CD14-positive monocyte (primary cell): ENCODE measurements at regions of chr9 and their contacts with region 1.

Region 1: DNA sequence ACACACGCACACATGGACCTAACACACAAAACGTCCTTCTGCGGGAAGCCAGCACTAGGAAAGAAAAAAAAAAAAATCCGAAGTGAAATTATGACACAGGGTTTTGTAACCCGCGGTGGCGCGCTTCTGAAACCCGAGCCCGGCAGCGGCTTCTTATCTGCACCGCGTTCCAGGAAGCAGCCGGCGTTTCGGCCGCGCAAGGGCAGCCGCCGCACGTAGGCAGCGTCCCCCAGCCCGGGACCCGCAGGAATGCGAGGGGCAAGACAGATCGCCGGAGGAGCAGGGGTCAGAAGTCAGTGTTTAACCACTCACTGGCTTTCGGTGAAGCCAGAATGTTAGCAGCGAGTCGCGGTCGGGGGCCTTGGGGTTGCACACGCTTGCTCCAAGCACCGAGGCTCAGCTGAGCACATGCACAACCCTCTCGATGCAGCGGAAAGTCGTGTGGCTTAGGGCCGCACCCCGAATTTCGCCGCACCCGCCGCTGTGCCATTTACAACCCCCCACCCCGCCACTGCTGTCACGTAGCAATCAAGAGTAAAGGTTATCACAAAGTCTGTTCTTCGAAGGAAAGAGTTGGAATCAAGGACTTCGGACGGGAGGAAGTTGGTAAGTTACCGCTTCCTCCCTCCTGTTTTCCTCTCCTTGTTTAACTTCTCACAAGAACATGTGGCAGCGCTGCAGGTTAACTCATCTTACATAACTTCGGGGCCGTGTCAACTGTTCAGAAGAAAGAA is 167.9 kb downstream of the AUH start:
- DNase-seq: peak; percentile 74 to 87 (median 87)
- H3K4me3 ChIP-seq: peak overlapping the region; percentile 25 to 71 (median 37)
- H3K4me3 Mint-ChIP-seq: peak overlapping the region; percentile 79 to 92
- H3K27ac ChIP-seq: peak overlapping the region; percentile 87 to 94
- H3K27ac Mint-ChIP-seq: peak overlapping the region; percentile 93 to 99 (median 97)
- H3K4me1 ChIP-seq: peaks cover 72 to 80% of the 10 kb centered on the region in 2 donors
- H3K4me1 Mint-ChIP-seq: peaks cover 72% of the 10 kb centered on the region
- H3K27me3 ChIP-seq: no peaks in the 10 kb centered on the region
- H3K27me3 Mint-ChIP-seq: peaks cover 0 to 1% (median 0%) of the 10 kb centered on the region in 3 donors
- CTCF ChIP-seq: no peak

Region 2: DNA sequence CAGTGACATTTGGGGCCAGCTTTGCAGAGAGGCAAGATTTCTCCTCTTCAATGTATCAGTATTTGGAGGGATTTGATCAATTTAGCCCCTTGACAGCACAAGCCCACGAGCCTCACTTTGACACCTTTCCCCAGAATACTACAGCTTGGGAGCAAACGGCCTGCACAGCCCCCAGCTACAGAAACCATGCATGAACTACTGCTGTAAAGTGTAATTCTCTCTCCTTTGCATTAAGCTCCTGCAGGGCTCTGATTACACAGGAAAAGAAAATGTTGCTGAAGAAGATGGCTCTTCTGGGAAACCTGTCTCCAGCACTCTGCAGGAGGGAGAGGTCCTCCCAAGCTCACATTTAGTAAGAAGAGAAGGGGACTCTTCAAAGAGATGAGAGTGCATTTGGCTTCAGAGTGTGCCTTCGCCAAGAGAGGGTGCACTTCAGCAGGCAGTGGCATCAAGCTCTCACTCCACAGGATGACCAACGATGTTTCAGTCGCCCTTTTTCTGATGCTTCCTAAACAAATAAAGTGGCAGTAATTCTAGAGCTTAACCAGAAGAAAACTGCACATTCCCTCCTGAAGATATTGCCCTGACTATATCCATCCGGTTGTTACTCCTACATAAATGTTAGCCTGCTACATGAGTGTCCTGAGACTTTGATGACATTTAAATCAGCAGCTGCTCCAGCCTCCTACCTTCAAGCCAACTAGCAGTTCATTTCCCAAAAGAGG is 104.3 kb before region 1 on chr9:
- intact Hi-C with region 1: loop called (anchors 1 to 10 kb)
- DNase-seq: peak in 2 of 3 donors; percentile 8 to 29
- H3K4me3 ChIP-seq: no peak overlapping the region
- H3K4me3 Mint-ChIP-seq: no peak overlapping the region
- H3K27ac ChIP-seq: no peak overlapping the region
- H3K27ac Mint-ChIP-seq: peak overlapping the region in 1 of 7 donors; percentile 57
- H3K4me1 ChIP-seq: peaks cover 30 to 31% of the 10 kb centered on the region in 2 donors
- H3K4me1 Mint-ChIP-seq: peaks cover 32% of the 10 kb centered on the region
- H3K27me3 ChIP-seq: no peaks in the 10 kb centered on the region
- H3K27me3 Mint-ChIP-seq: no peaks in the 10 kb centered on the region
- CTCF ChIP-seq: peak; percentile 19

Region 3: GRCh38 chr9:91111876-91112275 is 81.9 kb before region 1 on chr9:
- intact Hi-C with region 1: no loop called
- DNase-seq: no peak
- H3K4me3 ChIP-seq: no peak overlapping the region
- H3K4me3 Mint-ChIP-seq: no peak overlapping the region
- H3K27ac ChIP-seq: no peak overlapping the region
- H3K27ac Mint-ChIP-seq: no peak overlapping the region
- H3K4me1 ChIP-seq: no peaks in the 10 kb centered on the region
- H3K4me1 Mint-ChIP-seq: no peaks in the 10 kb centered on the region
- H3K27me3 ChIP-seq: no peaks in the 10 kb centered on the region
- H3K27me3 Mint-ChIP-seq: peaks cover 1 to 5% (median 2%) of the 10 kb centered on the region in 3 donors
- CTCF ChIP-seq: no peak

Region 4: DNA sequence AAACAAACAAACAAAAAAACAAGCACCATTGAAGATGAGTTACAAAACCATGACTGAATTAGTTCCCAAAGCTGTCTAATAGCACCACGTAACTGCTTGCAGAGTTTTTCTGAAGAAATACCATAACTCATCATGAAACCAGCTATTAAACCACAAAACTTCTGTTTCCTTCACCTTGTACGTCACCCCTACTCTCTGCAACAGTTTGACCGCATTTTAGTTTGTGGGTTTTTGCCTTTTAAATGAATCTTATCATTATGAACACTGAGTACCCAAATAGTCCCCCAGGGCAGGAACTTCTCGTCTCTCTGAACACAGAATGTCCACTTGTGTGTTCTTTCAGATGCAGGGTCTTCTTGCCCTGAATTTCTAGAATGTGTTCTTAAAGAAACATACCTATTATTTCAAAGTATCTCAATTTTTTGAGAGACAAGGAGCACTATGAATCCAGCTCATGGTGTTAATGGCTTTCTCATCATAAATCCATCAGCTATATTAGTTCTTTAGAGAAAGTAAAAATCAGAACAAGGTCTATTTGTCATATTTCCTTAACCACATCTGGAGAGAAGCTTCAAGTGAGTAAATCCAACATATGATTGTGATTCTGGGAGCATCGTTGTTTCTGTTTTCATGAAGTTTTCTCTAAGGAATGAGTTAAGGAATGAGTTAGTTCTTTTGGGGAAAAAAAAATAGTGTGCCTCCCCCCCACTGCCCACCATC is 42.7 kb before region 1 on chr9:
- intact Hi-C with region 1: loop called (anchors 2 to 5 kb)
- DNase-seq: peak; percentile 89 to 96 (median 95)
- H3K4me3 ChIP-seq: no peak overlapping the region
- H3K4me3 Mint-ChIP-seq: peak overlapping the region; percentile 31 to 46
- H3K27ac ChIP-seq: peak overlapping the region in 1 of 2 donors; percentile 76
- H3K27ac Mint-ChIP-seq: peak overlapping the region; percentile 87 to 96 (median 94)
- H3K4me1 ChIP-seq: peaks cover 47 to 48% of the 10 kb centered on the region in 2 donors
- H3K4me1 Mint-ChIP-seq: peaks cover 57% of the 10 kb centered on the region
- H3K27me3 ChIP-seq: no peaks in the 10 kb centered on the region
- H3K27me3 Mint-ChIP-seq: peaks cover 2 to 8% (median 6%) of the 10 kb centered on the region in 3 donors
- CTCF ChIP-seq: no peak

Region 5: DNA sequence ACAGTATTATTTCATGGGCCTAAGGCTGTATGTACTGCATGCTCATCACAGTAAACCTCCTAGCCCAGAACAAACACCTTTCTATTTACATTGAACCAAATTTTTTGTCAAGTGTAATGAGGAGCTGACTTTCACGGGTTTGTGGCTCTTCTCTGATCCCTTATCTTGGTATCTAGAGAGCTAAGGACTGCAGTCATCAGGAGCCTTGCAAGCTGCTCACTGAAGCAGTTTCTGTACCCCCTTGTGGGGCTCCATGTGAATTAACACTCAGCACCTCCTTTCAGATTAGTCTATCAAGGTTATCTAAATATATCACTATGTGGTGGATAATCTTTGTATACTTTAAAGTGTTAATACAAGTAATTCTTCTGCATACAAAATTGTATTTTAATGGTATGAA is 59.7 kb after region 1 on chr9:
- intact Hi-C with region 1: loop called (anchors 5 to 10 kb)
- DNase-seq: peak in 1 of 3 donors; percentile 7
- H3K4me3 ChIP-seq: no peak overlapping the region
- H3K4me3 Mint-ChIP-seq: no peak overlapping the region
- H3K27ac ChIP-seq: no peak overlapping the region
- H3K27ac Mint-ChIP-seq: no peak overlapping the region
- H3K4me1 ChIP-seq: peaks cover 6 to 8% of the 10 kb centered on the region in 2 donors
- H3K4me1 Mint-ChIP-seq: peaks cover 11% of the 10 kb centered on the region
- H3K27me3 ChIP-seq: no peaks in the 10 kb centered on the region
- H3K27me3 Mint-ChIP-seq: no peaks in the 10 kb centered on the region
- CTCF ChIP-seq: no peak

Region 6: GRCh38 chr9:91422758-91423711 is 229.2 kb after region 1 on chr9:
- intact Hi-C with region 1: loop called (anchors 2 to 5 kb)
- DNase-seq: peak in 2 of 3 donors; percentile 43 to 57
- H3K4me3 ChIP-seq: peak overlapping the region; percentile 96 to 99 (median 97)
- H3K4me3 Mint-ChIP-seq: peak overlapping the region; percentile 99 to 100
- H3K27ac ChIP-seq: peak overlapping the region; percentile 66 to 97
- H3K27ac Mint-ChIP-seq: peak overlapping the region; percentile 93 to 100 (median 97)
- H3K4me1 ChIP-seq: peaks cover 61 to 74% of the 10 kb centered on the region in 2 donors
- H3K4me1 Mint-ChIP-seq: peaks cover 57% of the 10 kb centered on the region
- H3K27me3 ChIP-seq: peaks cover 6 to 13% of the 10 kb centered on the region in 2 donors
- H3K27me3 Mint-ChIP-seq: peaks cover 10 to 33% (median 21%) of the 10 kb centered on the region in 3 donors
- CTCF ChIP-seq: no peak